Mucosa of descending colon (tissue), 3 donors: ENCODE measurements at regions of chr7 and their contacts with region 1.

Region 1: GRCh38 chr7:94289071-94289470 is 105.6 kb upstream of the COL1A2 start:
- DNase-seq: peak in 2 of 3 donors; percentile 27 to 67
- ATAC-seq: peak; percentile 61
- H3K4me3 ChIP-seq: no peak overlapping the region
- H3K4me1 ChIP-seq: no peaks in the 10 kb centered on the region
- CTCF ChIP-seq: peak; percentile 58

Region 2: DNA sequence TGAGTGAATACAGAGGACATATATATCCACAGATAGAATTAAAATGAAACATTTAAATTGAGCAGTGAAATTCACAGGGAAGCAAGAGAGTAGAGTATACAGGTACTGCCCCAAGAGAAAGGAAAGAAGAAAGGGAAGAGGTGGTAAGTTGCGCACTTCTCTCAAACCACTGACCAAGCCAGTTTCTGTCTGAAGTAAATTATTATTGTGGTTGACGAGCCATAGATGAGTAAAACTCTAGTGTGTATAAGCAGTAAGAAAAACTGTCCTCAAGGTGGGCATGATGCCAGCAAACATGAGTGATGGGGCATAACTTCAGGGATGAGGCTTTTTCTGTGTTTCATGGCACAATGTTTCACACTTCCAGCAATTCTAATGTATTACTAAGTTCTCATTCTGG is 280.5 kb before region 1 on chr7:
- intact Hi-C with region 1: no loop called
- DNase-seq: no peak
- ATAC-seq: no peak
- H3K4me3 ChIP-seq: no peak overlapping the region
- H3K4me1 ChIP-seq: peaks cover under 1% of the 10 kb centered on the region
- CTCF ChIP-seq: no peak

Region 3: DNA sequence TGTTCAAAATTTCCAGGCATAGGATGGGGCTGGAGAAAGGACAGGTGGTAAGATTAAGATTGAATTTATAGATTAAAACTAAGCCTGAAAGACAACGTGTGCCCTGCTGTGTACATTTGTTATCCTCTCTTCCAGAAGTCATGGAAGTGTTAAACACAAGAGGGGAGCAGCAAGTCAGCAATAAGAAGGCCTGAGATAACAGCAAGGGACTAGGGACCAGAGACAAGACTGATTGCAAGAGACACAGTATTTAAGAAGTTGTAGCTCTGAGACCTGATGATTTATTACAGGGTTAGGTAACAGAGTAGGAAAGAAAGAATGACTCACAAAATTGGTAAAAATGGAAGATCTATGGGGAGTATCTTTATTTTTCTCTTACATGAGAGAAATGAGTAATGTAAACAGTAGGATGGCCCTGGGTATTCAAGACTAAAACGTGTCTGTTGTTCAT is 49.9 kb after region 1 on chr7:
- intact Hi-C with region 1: no loop called
- DNase-seq: no peak
- ATAC-seq: no peak
- H3K4me3 ChIP-seq: no peak overlapping the region
- H3K4me1 ChIP-seq: no peaks in the 10 kb centered on the region
- CTCF ChIP-seq: no peak

Region 4: DNA sequence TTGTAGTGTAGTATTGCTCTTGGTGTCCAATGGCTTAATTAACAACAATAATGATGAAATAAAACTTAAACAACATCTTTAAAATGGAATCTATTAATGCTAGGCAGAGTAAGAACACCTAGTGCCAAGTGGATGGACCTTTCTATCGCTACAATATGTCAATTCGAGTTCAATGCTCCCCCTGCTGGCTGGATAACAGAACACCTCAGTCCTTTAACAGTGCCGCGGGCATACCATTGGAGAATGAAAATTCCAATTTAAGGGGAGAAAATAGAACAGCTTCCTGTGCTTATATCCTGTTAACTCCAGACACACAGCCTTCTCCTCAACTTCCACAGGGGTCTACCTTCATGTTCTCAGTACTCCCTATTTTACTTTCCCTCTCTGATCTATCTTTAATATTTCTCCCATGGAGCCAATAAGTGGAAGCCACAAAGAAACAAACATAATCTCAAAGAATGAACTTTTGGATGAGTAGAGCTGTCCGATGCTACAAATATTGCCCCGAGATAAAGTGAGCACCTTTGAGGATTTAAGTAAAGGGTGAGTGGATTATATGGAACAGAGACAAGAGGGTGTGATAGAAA is 147.0 kb after region 1 on chr7:
- intact Hi-C with region 1: loop called (anchors 5 to 10 kb)
- DNase-seq: peak in 1 of 3 donors; percentile 77
- ATAC-seq: peak; percentile 75
- H3K4me3 ChIP-seq: no peak overlapping the region
- H3K4me1 ChIP-seq: peaks cover 3% of the 10 kb centered on the region
- CTCF ChIP-seq: peak; percentile 56